WTC11 (cell line): ENCODE measurements at regions of chr12 and their contacts with region 1.

Region 1: GRCh38 chr12:52879394-52880351 is 25.2 kb downstream of the KRT8 start:
- DNase-seq: peak; percentile 86
- ATAC-seq: peak; percentile 80
- H3K4me3 Mint-ChIP-seq: peak overlapping the region; percentile 74
- H3K27ac Mint-ChIP-seq: 0 out of 2 replicates have a peak overlapping the region, but pooled peaks have one; percentile 60
- H3K4me1 Mint-ChIP-seq: peaks cover 14% of the 10 kb centered on the region
- H3K27me3 Mint-ChIP-seq: peaks cover 12% of the 10 kb centered on the region
- CTCF ChIP-seq: peak; percentile 86

Region 2: GRCh38 chr12:52372216-52373154 is 507.2 kb before region 1 on chr12:
- CTCF ChIA-PET with region 1: interaction called, 37 read pairs
- POLR2A ChIA-PET with region 1: no interaction called
- DNase-seq: peak; percentile 81
- ATAC-seq: peak; percentile 91
- H3K4me3 Mint-ChIP-seq: no peak overlapping the region
- H3K27ac Mint-ChIP-seq: no peak overlapping the region
- H3K4me1 Mint-ChIP-seq: no peaks in the 10 kb centered on the region
- H3K27me3 Mint-ChIP-seq: no peaks in the 10 kb centered on the region
- CTCF ChIP-seq: peak; percentile 50; the same call in 1 of the 2 replicates

Region 3: GRCh38 chr12:52611080-52611468 is 268.6 kb before region 1 on chr12:
- CTCF ChIA-PET with region 1: interaction called, 11 read pairs
- POLR2A ChIA-PET with region 1: no interaction called
- DNase-seq: no peak
- ATAC-seq: no peak
- H3K4me3 Mint-ChIP-seq: no peak overlapping the region
- H3K27ac Mint-ChIP-seq: no peak overlapping the region
- H3K4me1 Mint-ChIP-seq: peaks cover 4% of the 10 kb centered on the region; the same call in 1 of the 2 replicates
- H3K27me3 Mint-ChIP-seq: peaks cover 3% of the 10 kb centered on the region; the same call in 1 of the 2 replicates
- CTCF ChIP-seq: no peak

Region 4: DNA sequence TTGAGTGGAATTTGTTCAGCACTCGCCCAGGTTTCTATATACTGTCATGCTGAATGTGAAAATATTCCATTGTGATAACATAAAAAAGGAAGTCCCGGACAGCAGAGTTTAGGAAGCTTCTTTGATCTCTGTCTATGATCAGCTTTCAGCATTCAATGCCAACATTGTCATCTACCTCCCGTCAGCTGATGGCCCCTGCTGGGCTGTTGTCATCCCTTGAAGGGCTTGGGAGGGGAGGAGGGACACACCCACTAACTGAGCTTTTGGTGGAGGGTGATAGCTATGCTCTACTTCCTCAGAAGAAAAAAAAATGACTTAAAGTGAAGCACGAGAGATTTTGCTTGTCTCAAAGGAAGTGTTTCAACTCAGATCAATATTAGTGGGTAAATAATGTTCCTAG is 171.7 kb before region 1 on chr12:
- CTCF ChIA-PET with region 1: interaction called, 24 read pairs
- POLR2A ChIA-PET with region 1: no interaction called
- DNase-seq: no peak
- ATAC-seq: no peak
- H3K4me3 Mint-ChIP-seq: no peak overlapping the region
- H3K27ac Mint-ChIP-seq: no peak overlapping the region
- H3K4me1 Mint-ChIP-seq: no peaks in the 10 kb centered on the region; the same call in 1 of the 2 replicates
- H3K27me3 Mint-ChIP-seq: peaks cover 18% of the 10 kb centered on the region
- CTCF ChIP-seq: no peak

Region 5: DNA sequence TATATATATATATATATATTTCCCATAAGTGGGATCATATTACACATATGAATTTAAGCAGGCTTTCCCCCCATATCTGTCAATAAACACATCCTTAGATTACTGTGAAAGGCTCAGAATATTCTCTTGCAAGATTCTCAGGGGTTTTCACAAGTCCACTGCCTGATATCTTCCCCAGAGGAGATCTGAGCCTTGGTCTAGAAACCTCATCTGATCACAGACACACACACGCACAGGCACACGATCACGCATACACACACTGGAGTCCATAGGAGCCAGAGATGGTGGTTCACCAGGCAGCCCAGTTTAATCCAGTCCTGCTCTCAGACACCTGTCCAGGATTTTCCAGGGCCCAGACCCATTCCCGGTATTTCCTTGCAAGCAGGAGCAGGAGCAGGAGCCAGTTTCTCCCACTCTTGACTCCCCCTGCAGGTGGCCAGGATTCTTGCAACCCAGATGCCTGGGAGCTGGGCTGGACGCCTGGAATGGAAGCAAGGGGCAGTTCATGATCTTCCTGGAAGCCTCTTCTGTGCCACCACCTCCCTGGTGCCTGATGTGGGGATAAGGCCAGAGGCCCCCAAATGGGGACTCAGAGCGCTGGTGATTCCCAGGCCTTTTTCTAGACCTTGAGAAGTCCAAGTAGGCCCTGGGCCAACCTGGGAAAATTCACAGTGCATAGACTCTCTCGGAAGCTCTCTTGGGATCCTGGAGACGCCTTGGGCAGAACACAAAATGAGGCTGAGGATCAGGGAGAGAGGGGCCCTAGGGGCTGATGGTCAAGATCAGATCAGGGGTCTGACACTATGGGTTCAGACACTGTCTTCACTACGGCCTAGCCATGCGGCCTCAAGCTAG is 14.4 kb before region 1 on chr12:
- CTCF ChIA-PET with region 1: interaction called, 83 read pairs
- POLR2A ChIA-PET with region 1: no interaction called
- DNase-seq: peak; percentile 91
- ATAC-seq: peak; percentile 86
- H3K4me3 Mint-ChIP-seq: no peak overlapping the region
- H3K27ac Mint-ChIP-seq: peak overlapping the region; percentile 19; the same call in 1 of the 2 replicates
- H3K4me1 Mint-ChIP-seq: peaks cover 6% of the 10 kb centered on the region; the same call in 1 of the 2 replicates
- H3K27me3 Mint-ChIP-seq: no peaks in the 10 kb centered on the region
- CTCF ChIP-seq: peak; percentile 78

Region 6: GRCh38 chr12:52924764-52925716 is 45.4 kb after region 1 on chr12:
- CTCF ChIA-PET with region 1: interaction called, 17 read pairs
- POLR2A ChIA-PET with region 1: no interaction called
- DNase-seq: no peak
- ATAC-seq: no peak
- H3K4me3 Mint-ChIP-seq: no peak overlapping the region
- H3K27ac Mint-ChIP-seq: no peak overlapping the region; the same call in 1 of the 2 replicates
- H3K4me1 Mint-ChIP-seq: peaks cover 55% of the 10 kb centered on the region
- H3K27me3 Mint-ChIP-seq: no peaks in the 10 kb centered on the region
- CTCF ChIP-seq: no peak

Region 7: DNA sequence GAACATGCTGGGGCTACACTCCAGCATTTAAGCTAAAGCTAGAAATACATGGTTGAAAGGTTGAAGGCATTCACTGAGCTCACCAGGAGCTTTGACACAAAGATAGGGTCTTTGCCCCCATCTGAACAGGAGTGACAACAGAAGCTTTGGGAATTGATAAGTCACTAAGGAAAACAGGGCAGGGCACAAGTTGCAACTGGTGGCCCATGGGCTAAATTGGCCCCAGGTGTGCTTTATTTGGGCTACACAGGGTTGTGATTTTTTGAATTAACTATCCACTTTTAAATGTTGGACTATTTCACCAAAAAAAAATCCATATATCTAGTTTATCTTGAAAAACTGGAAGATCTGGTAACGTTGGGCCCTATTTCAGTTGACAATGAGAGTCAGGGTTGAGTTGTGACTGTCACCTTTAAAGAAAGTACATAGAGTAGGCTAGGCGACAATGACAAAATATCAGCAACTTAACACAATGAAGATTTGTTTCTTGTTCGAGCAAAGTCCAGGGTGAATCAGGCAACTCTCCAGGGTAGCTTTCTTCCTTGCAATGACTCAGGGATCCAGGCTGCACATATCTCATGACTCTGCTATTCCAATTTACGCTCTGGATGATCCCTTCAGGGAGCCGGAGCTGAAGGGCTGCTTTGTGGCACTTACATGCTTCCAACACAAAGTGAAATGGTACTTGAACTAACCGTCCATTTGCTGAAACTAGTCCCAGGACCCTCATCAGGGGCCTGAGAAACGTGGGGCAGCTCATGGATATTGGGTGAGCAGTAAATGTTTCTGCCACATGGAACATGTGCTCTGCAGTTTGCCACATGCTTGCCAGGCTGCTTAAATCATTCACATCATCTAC is 113.3 kb after region 1 on chr12:
- CTCF ChIA-PET with region 1: interaction called, 526 read pairs
- POLR2A ChIA-PET with region 1: no interaction called
- DNase-seq: no peak
- ATAC-seq: no peak
- H3K4me3 Mint-ChIP-seq: no peak overlapping the region
- H3K27ac Mint-ChIP-seq: no peak overlapping the region
- H3K4me1 Mint-ChIP-seq: peaks cover 8% of the 10 kb centered on the region; the same call in 1 of the 2 replicates
- H3K27me3 Mint-ChIP-seq: peaks cover 7% of the 10 kb centered on the region
- CTCF ChIP-seq: no peak